Panc1 (cell line): ENCODE measurements at regions of chr7 and their contacts with region 1.

Region 1: GRCh38 chr7:101197991-101198390 is 2.8 kb downstream of the MOGAT3 start:
- DNase-seq: no peak
- ATAC-seq: no peak
- H3K4me3 ChIP-seq: no peak overlapping the region
- H3K27ac ChIP-seq: no peak overlapping the region
- H3K4me1 ChIP-seq: peaks cover 5% of the 10 kb centered on the region; the same call in 1 of the 2 replicates
- H3K27me3 ChIP-seq: no peaks in the 10 kb centered on the region
- CTCF ChIP-seq: no peak

Region 2: GRCh38 chr7:100158229-100159098 is 1039.5 kb before region 1 on chr7 and contains the start of gene TRAPPC14:
- CTCF ChIA-PET with region 1: no interaction called
- POLR2A ChIA-PET with region 1: no interaction called
- in situ Hi-C with region 1: no loop called
- intact Hi-C with region 1: no loop called
- DNase-seq: no peak
- ATAC-seq: peak; percentile 83
- H3K4me3 ChIP-seq: peak within 1 kb of the TSS; percentile 78 to 91
- H3K27ac ChIP-seq: peak within 1 kb of the TSS; percentile 81
- H3K4me1 ChIP-seq: peaks cover 38% of the 10 kb centered on the region
- H3K27me3 ChIP-seq: no peaks in the 10 kb centered on the region
- CTCF ChIP-seq: no peak
- total RNA-seq, gene TRAPPC14: 33.2 TPM

Region 3: GRCh38 chr7:101058355-101058754 is 139.6 kb before region 1 on chr7:
- CTCF ChIA-PET with region 1: no interaction called
- POLR2A ChIA-PET with region 1: no interaction called
- in situ Hi-C with region 1: no loop called
- intact Hi-C with region 1: no loop called
- DNase-seq: no peak
- ATAC-seq: no peak
- H3K4me3 ChIP-seq: no peak overlapping the region
- H3K27ac ChIP-seq: no peak overlapping the region
- H3K4me1 ChIP-seq: no peaks in the 10 kb centered on the region
- H3K27me3 ChIP-seq: peaks cover 17% of the 10 kb centered on the region
- CTCF ChIP-seq: no peak

Region 4: DNA sequence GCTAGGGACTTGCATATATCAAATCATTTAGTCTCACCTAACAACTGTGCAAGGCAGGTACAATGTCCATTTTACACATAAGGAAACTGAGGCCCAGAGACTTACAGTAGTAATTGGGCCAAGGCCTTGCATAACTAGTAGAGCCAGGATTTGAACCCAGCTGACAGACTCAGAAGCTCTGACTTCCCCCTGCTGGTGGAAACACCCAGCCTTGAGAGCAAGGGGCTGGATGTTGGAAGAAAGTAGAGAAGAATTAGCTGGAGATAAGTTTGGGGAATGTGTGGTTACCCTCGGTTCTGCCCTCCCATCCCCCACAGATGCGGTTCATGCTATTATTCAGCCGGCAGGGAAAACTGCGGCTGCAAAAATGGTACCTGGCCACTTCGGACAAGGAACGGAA is 41.7 kb before region 1 on chr7:
- CTCF ChIA-PET with region 1: interaction called, 17 read pairs
- POLR2A ChIA-PET with region 1: no interaction called
- in situ Hi-C with region 1: no loop called
- intact Hi-C with region 1: no loop called
- DNase-seq: no peak
- ATAC-seq: no peak
- H3K4me3 ChIP-seq: no peak overlapping the region
- H3K27ac ChIP-seq: no peak overlapping the region
- H3K4me1 ChIP-seq: peaks cover 25% of the 10 kb centered on the region
- H3K27me3 ChIP-seq: no peaks in the 10 kb centered on the region
- CTCF ChIP-seq: no peak; the same call in 1 of the 2 replicates

Region 5: GRCh38 chr7:101179118-101179517 is 18.9 kb before region 1 on chr7:
- CTCF ChIA-PET with region 1: interaction called, 17 read pairs
- POLR2A ChIA-PET with region 1: no interaction called
- in situ Hi-C with region 1: no loop called
- intact Hi-C with region 1: no loop called
- DNase-seq: no peak
- ATAC-seq: no peak
- H3K4me3 ChIP-seq: peak overlapping the region; percentile 24 to 40
- H3K27ac ChIP-seq: no peak overlapping the region
- H3K4me1 ChIP-seq: peaks cover 2% of the 10 kb centered on the region
- H3K27me3 ChIP-seq: 0 out of 2 replicates have a peak, but pooled peaks cover 2% of the 10 kb centered on the region
- CTCF ChIP-seq: no peak

Region 6: GRCh38 chr7:102198417-102198955 is 1000.5 kb after region 1 on chr7:
- CTCF ChIA-PET with region 1: no interaction called
- POLR2A ChIA-PET with region 1: no interaction called
- in situ Hi-C with region 1: no loop called
- intact Hi-C with region 1: no loop called
- DNase-seq: no peak
- ATAC-seq: no peak
- H3K4me3 ChIP-seq: no peak overlapping the region
- H3K27ac ChIP-seq: no peak overlapping the region
- H3K4me1 ChIP-seq: no peaks in the 10 kb centered on the region
- H3K27me3 ChIP-seq: no peaks in the 10 kb centered on the region
- CTCF ChIP-seq: no peak